Tibial artery (tissue), 4 donors: ENCODE measurements at regions of chr11 and their contacts with region 1.

Region 1: DNA sequence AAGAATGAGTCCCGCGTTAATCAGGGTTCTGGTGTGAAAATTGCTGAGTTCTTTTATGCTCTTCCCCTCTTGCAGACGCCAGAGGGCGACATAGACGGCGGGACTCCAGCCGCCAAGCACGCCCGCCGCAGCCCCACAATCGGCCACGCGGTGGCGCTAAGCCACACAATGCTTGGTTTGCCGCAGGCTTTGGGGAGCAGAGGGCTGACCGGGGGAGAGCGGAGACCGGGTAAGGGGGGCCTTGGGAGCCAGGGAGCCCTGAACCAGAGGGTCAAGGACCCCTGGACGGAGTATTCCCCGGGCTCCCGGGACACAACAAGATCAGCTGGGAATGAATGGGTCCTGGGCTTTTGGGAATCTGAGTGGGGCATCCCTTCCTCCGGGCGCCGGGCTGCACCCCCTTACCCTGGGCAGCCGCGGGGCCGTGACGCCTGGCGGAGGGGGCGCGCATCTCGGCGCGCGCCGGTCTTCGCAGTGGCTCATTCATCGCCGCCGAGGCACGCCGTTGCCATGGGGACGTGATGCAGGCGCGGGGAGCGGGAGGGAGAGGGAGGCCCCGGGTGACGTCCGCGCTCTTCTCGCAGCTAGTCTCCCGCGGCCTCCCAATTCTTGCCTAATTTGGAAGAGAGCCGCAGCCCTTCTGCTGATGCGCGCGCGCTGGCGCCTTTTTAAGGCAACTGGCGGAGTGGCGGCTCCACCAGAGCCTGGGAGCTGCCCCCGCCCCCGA is 12.2 kb upstream of the NPAS4 start:
- DNase-seq: peak; percentile 90 to 96
- H3K4me3 ChIP-seq: peak overlapping the region; percentile 50 to 59
- H3K27ac ChIP-seq: peak overlapping the region; percentile 70
- H3K4me1 ChIP-seq: peaks cover 5 to 48% (median 21%) of the 10 kb centered on the region in 4 donors
- H3K27me3 ChIP-seq: peaks cover 0 to 12% of the 10 kb centered on the region in 2 donors
- CTCF ChIP-seq: peak; percentile 100

Region 2: GRCh38 chr11:66429983-66430602 is 21.4 kb after region 1 on chr11:
- intact Hi-C with region 1: loop called (anchors 2 kb)
- DNase-seq: peak; percentile 52 to 84
- H3K4me3 ChIP-seq: no peak overlapping the region
- H3K27ac ChIP-seq: no peak overlapping the region
- H3K4me1 ChIP-seq: no peaks in the 10 kb centered on the region
- H3K27me3 ChIP-seq: no peaks in the 10 kb centered on the region
- CTCF ChIP-seq: peak; percentile 71 to 93